ENCODE measurements at regions of chrX and their contacts with region 1.

Region 1: GRCh38 chrX:53961861-53962260 is 82.4 kb downstream of the PHF8 start:
- DNase-seq: no peak
- H3K4me3 ChIP-seq: no peak overlapping the region
- H3K27ac ChIP-seq: no peak overlapping the region
- H3K4me1 ChIP-seq: no peaks in the 10 kb centered on the region
- H3K27me3 ChIP-seq: no peaks in the 10 kb centered on the region
- CTCF ChIP-seq: no peak

Region 2: DNA sequence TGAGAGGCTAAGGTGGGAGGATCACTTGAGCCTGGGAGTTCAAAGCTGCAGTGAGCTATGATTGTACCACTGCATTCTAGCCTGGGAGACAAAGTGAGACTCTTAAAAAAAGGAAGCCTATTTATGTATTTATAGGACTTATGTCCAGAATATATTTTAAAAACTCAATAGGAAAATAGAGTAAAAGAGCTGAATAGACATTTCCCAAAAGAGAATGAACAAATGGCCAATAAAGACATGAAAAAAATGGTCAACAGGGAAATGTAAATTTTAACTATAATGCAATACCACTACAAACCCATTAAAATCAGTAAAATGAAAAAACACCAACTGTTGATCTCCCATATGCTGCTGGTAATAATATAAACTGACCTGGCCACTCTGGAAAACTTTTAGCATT is 390.4 kb before region 1 on chrX:
- CTCF ChIA-PET with region 1: no interaction called
- POLR2A ChIA-PET with region 1: no interaction called
- intact Hi-C with region 1: no loop called
- DNase-seq: no peak
- H3K4me3 ChIP-seq: no peak overlapping the region
- H3K27ac ChIP-seq: no peak overlapping the region
- H3K4me1 ChIP-seq: no peaks in the 10 kb centered on the region
- H3K27me3 ChIP-seq: no peaks in the 10 kb centered on the region
- CTCF ChIP-seq: no peak

Region 3: DNA sequence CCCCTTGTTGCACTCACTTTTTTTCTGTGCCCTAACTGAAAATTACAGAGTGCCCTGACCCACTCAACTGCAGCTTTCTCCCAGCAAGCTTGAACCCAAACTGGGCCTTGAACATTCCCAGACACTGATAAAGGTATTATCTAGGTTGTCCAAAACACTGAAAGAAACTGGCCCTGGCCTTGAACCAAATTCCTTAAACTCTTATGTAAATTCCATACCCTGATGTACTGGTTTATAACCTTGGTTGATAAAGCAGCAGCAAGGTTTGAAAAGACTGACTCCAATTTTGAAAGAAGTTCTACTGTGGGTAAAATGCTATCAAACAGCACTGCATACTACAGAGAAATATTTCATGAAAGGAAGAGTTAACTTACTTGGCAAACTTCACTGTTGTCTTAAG is 43.2 kb before region 1 on chrX:
- CTCF ChIA-PET with region 1: no interaction called
- POLR2A ChIA-PET with region 1: no interaction called
- intact Hi-C with region 1: no loop called
- DNase-seq: no peak
- H3K4me3 ChIP-seq: no peak overlapping the region
- H3K27ac ChIP-seq: no peak overlapping the region
- H3K4me1 ChIP-seq: no peaks in the 10 kb centered on the region
- H3K27me3 ChIP-seq: no peaks in the 10 kb centered on the region
- CTCF ChIP-seq: no peak

Region 4: DNA sequence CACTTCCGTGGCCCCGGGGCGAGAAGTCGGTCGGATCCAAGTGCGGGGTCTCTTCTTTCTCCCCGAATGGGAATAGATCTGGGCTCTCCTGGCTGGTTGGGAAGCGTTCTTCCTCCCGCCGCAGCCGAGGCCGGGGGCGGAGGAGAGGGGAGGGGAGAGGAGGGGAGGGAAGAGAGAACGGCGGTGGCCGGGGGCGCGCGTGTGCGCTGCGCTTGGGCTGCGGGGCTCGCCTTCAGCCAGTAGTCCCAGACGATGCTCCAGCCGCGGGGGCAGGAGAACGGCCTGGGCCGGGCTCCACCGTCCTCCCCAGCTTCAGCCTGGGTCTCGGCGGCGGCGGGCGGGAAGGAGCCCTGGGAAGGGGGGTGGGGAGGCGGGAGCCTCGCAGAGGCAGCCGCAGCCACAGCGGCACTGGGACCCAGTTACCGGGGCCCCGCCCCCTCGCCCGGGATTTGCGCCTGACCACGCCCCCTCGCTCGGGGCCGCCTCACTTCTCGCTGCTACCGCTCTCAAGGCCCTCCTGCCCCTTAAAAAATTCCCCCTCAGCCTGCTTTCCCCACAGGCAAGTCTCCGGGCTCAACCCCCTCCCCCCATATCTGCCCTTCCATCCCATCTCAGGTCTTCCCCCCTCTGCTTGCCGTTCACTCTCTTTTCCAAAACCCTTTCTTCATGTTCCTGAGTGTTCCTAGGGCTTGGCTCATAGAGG is 534.1 kb after region 1 on chrX and contains the start of gene FGD1:
- CTCF ChIA-PET with region 1: interaction called, 21 read pairs
- POLR2A ChIA-PET with region 1: no interaction called
- intact Hi-C with region 1: no loop called
- DNase-seq: peak in 1 of 2 experiments; percentile 77
- H3K4me3 ChIP-seq: peak within 1 kb of the TSS; percentile 64
- H3K27ac ChIP-seq: no peak within 1 kb of the TSS
- H3K4me1 ChIP-seq: peaks cover 4% of the 10 kb centered on the region; the same call in 1 of the 2 replicates
- H3K27me3 ChIP-seq: no peaks in the 10 kb centered on the region
- CTCF ChIP-seq: no peak
- total RNA-seq, gene FGD1: 20.3 and 23.5 TPM in 2 replicates

Measured in PC-9 (cell line).